ENCODE measurements at regions of chr1 and their contacts with region 1.

Region 1: DNA sequence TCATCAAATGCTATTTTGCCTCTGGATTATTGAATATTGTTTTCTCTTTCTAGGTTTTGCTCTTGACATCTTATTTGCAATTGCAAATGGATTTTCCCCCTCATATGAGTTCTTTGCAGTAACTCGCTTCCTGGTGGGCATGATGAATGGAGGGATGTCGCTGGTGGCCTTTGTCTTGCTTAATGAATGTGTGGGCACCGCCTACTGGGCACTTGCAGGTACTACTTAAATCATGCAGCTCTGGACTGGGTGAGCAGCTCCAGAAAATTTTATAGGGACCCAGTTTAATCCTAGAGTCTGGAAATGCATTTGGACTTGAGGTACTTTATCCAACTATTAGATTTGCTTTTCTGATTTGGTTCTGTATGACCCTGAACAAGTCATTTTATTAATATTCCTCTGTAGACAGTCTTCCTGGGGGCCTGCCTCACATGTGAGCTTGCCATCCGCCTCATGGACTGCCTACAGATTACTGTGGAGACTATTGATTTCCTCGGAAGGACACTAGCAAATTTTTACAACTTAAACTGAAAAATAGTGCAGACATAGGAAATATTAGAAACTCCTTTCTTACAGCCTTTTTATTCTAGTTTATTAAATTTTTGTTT is 44.5 kb downstream of the SLC22A15 start:
- ATAC-seq: peak in 5 of 8 experiments; percentile 26 to 85 (median 62)
- H3K4me3 ChIP-seq: no peak overlapping the region
- H3K27ac ChIP-seq: no peak overlapping the region
- H3K4me1 ChIP-seq: no peaks in the 10 kb centered on the region

Region 2: GRCh38 chr1:115727706-115728249 is 293.0 kb before region 1 on chr1:
- in situ Hi-C with region 1: no loop called
- ATAC-seq: peak; percentile 59 to 98 (median 94)
- H3K4me3 ChIP-seq: no peak overlapping the region
- H3K27ac ChIP-seq: peak overlapping the region; percentile 19 to 36
- H3K4me1 ChIP-seq: peaks cover 13% of the 10 kb centered on the region in 2 donors

Region 3: GRCh38 chr1:115829023-115829693 is 191.6 kb before region 1 on chr1:
- in situ Hi-C with region 1: loop called in 1 of 9 experiments (anchors 25 kb)
- ATAC-seq: peak; percentile 62 to 90 (median 76)
- H3K4me3 ChIP-seq: peak overlapping the region in 2 of 5 donors; percentile 25 to 29
- H3K27ac ChIP-seq: no peak overlapping the region
- H3K4me1 ChIP-seq: peaks cover 32 to 33% of the 10 kb centered on the region in 2 donors